Right ventricle myocardium inferior (tissue), 1 donor: ENCODE measurements at regions of chr6 and their contacts with region 1.

Region 1: DNA sequence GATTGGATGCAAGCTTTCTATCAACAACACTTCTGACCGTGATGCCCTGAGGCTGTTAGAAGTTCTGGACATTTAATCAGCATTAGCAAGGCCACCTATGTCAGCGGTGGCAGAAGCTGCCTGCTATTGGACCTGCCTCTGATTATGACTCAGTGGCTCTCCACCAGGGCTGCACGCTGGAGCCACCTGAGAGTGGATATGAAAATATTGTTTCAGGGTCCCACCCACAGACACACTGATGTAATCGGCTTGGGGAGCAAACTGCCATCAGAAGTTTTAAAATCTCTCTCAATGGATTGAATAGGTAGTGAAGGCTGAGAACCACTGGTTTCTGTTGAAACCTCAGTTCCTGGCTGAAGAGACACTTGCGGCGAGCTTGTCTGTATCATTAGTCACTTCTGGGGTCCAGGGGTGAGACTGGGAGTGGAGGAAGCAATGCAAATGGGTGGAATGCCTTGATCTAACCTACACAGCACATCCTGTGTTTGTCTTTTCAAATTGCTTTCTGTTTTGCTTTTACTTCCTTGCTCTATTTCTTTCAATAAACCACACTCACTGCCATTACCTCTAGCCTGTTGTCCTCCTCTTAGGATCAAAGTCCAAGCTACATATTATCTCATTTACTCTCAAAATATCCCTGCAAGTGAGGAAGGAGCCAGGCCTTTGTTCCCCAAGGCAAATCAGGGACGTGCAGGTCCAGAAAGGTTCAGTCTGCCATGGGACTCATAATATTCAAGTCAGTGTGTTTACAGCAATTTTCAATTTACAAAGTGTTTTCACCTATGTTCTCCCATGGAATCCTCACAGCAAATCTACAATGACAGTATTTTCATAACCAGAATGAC is 4.2 kb downstream of the CLIC5 start:
- DNase-seq: no peak
- ATAC-seq: peak; percentile 35

Region 2: GRCh38 chr6:45930420-45931040 is 80.9 kb before region 1 on chr6:
- intact Hi-C with region 1: loop called (anchors 5 kb)
- DNase-seq: peak; percentile 80
- ATAC-seq: peak; percentile 71

Region 3: DNA sequence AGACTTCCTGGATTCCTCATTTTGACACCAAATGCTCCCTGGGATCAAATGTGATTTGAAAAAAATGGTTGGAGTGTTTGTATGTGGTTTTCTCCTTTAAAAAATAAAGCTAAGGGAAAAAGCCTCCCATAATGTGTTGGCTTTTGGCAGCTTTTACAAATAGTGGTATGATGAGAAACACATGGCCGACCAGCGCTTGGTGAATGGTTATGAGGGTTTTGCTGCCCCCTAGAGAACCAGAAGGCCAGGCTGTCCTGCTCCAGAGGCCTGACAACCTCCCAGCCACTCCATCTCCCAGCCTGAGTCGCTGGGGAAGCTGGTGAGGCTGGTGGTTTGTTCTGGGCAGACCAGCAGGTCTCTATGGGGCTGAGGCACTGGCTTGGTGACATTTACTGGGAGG is 65.1 kb before region 1 on chr6:
- intact Hi-C with region 1: loop called (anchors 5 kb)
- DNase-seq: no peak
- ATAC-seq: peak; percentile 84

Region 4: GRCh38 chr6:45970326-45970970 is 41.0 kb before region 1 on chr6:
- intact Hi-C with region 1: loop called (anchors 5 kb)
- DNase-seq: no peak
- ATAC-seq: no peak

Region 5: DNA sequence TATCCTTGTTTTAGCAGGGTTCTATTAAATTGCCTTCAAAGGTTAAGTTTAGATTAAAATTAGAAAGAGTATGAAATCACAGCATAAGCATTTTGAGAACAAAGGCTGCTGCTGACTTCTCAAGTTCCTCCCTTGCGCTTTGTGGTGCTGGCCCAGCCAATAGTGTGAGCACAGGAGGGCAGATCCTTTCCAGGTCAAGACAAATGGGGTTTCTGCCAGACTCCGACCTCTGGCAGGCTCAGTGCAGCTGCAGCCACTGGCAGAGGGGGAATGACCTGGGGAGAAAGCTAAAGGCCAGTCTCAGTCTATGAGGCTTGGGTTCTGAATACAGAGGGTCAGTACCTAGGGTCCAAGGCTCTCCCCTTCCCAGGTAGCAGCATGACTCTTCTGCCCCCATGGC is 22.8 kb before region 1 on chr6:
- intact Hi-C with region 1: loop called (anchors 2 kb)
- DNase-seq: peak; percentile 73
- ATAC-seq: peak; percentile 72

Region 6: DNA sequence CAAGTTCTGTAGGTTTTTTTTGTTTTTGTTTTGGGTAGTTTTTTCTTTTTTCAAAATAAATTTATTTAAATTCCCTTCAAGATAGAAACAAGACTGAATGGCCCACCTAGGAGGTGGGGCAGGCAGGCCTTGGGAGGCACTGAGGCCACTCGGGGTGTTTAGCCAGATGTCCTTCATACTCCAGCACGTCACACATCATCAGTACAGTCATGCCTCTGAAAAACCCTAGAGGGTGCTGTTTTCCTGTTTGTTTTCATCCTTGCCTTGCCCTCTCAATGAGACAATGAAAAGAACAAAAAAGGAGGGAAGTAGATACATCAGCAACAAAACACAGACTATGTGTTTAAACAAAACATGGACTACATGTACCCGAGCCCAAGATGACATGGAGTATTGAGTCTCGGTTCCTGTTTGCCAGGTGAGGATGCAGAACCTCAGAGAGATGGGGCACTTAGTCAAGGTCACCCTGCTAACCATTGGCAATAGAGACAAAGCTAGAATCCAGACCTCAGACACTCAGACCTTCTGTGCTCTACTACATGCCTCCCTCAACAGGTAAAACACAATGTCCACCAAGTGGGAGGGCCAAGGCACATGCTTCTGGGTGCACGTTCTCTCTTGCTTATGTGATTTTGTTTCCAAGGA is 31.0 kb after region 1 on chr6:
- intact Hi-C with region 1: loop called (anchors 5 kb)
- DNase-seq: no peak
- ATAC-seq: peak; percentile 61

Region 7: DNA sequence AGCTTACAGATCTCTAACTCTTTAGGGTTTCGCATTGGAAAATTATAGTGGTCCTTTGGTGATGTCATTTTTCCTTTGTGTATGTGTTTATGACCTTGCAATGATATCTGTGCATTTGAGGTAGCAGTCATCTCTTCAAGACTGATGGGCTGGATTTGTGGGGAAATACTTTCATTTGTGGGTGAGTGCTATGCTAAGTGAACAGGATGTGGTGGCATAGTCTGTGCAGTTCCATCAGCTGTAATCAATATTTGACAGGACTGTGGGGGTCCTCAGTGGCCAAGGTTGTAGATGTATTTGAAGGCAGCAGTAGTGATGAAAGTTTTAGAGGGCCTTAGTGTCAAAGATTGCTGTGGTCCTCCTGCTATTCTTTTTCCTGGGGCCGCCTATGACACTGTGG is 561.7 kb after region 1 on chr6:
- intact Hi-C with region 1: no loop called
- DNase-seq: no peak
- ATAC-seq: no peak